Activated B cell treated with CpG ODN at 0.5 μM for 24 hours (primary cell): ENCODE measurements at regions of chr16 and their contacts with region 1.

Region 1: GRCh38 chr16:74695450-74696422 is 4.9 kb downstream of the MLKL start:
- DNase-seq: peak; percentile 44
- ATAC-seq: peak; percentile 89
- H3K4me3 Mint-ChIP-seq: peak overlapping the region; percentile 82
- H3K27ac Mint-ChIP-seq: peak overlapping the region; percentile 71
- H3K4me1 Mint-ChIP-seq: peaks cover 41% of the 10 kb centered on the region
- H3K27me3 Mint-ChIP-seq: no peaks in the 10 kb centered on the region
- CTCF ChIP-seq: no peak

Region 2: GRCh38 chr16:73036074-73036826 is 1659.5 kb before region 1 on chr16:
- CTCF ChIA-PET with region 1: no interaction called
- POLR2A ChIA-PET with region 1: interaction called, 17 read pairs
- intact Hi-C with region 1: no loop called
- DNase-seq: no peak
- ATAC-seq: peak; percentile 87
- H3K4me3 Mint-ChIP-seq: peak overlapping the region; percentile 75
- H3K27ac Mint-ChIP-seq: peak overlapping the region; percentile 78
- H3K4me1 Mint-ChIP-seq: peaks cover 46% of the 10 kb centered on the region
- H3K27me3 Mint-ChIP-seq: peaks cover 24% of the 10 kb centered on the region
- CTCF ChIP-seq: no peak

Region 3: DNA sequence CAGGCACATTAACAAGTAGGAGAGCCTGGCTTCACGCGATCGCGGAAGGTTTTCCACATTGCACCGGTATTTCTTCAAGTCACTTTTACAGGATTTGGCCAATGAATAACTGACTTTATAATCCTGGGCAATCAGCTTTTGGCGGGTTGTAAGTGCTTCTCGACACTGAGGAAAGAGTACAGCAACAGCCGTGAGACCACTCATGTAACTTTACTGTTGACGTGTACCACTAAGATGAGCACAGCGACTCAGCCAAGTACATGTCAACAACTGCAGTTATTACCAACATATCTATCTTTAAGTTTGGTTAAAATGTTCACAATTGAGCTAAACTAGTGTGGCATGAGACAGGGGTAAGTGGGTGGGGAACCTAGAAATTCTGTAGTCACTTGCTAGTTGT is 202.8 kb before region 1 on chr16:
- CTCF ChIA-PET with region 1: no interaction called
- POLR2A ChIA-PET with region 1: no interaction called
- intact Hi-C with region 1: no loop called
- DNase-seq: no peak
- ATAC-seq: no peak
- H3K4me3 Mint-ChIP-seq: no peak overlapping the region
- H3K27ac Mint-ChIP-seq: no peak overlapping the region
- H3K4me1 Mint-ChIP-seq: no peaks in the 10 kb centered on the region
- H3K27me3 Mint-ChIP-seq: no peaks in the 10 kb centered on the region
- CTCF ChIP-seq: no peak

Region 4: DNA sequence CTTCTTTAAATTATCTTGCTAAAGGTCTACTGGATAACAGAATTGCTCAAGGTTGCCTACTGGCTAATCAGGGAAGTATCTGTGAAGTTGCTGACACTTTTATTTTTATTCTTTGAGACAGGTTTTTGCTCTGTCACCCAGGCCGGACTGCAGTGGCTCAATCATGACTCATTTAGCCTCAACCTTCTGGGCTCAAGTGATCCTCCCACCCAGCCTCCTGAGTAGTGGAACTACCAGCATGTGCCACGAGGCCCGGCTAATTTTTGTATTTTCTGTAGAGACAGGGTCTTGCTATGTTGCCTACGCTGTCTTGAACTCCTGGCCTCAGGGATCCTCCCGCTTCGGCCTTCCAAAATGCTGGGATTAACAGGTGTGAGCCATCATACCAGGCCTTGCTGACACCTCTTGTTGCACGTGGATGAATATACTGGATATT is 131.9 kb before region 1 on chr16:
- CTCF ChIA-PET with region 1: no interaction called
- POLR2A ChIA-PET with region 1: no interaction called
- intact Hi-C with region 1: no loop called
- DNase-seq: no peak
- ATAC-seq: peak; percentile 28
- H3K4me3 Mint-ChIP-seq: no peak overlapping the region
- H3K27ac Mint-ChIP-seq: no peak overlapping the region
- H3K4me1 Mint-ChIP-seq: peaks cover 40% of the 10 kb centered on the region
- H3K27me3 Mint-ChIP-seq: no peaks in the 10 kb centered on the region
- CTCF ChIP-seq: no peak

Region 5: GRCh38 chr16:74666425-74667254 is 29.1 kb before region 1 on chr16 and contains the start of gene RFWD3:
- CTCF ChIA-PET with region 1: interaction called, 4 read pairs
- POLR2A ChIA-PET with region 1: interaction called, 45 read pairs
- intact Hi-C with region 1: loop called (anchors 1 kb)
- DNase-seq: peak; percentile 78
- ATAC-seq: peak; percentile 99
- H3K4me3 Mint-ChIP-seq: peak within 1 kb of the TSS; percentile 94
- H3K27ac Mint-ChIP-seq: peak within 1 kb of the TSS; percentile 90
- H3K4me1 Mint-ChIP-seq: peaks cover 38% of the 10 kb centered on the region
- H3K27me3 Mint-ChIP-seq: no peaks in the 10 kb centered on the region
- CTCF ChIP-seq: no peak
- total RNA-seq, gene RFWD3: 57.9 and 63.2 TPM in 2 replicates

Region 6: DNA sequence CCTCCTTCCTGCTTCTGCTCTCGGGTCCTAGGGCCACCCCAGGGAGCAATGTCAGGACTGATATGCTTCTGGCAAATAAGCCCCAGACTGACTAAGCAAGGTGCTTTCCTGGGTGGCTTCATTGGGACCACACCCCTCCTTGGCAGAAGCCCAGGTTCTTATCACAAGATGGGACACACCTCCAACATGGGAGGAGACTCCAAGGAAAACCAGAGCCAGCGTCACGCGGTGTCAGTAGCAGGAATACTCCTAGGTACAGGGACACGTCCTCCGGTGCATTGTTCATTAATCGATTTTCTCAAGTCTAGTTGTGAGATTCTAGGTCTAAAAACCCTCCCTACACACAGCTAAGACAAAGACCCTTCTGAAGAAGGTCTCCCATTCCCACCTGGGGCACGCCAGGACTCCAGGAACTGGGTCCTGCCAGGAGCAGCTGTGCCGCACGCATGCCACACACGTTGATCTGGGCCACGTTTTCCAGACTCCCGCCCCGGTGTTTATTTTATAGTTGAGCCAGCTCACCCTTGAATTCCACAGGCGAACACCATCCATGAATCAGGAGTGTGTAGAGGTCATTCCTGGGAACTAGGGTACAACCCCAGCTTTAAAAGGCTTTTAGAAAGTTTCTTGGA is 48.0 kb after region 1 on chr16:
- CTCF ChIA-PET with region 1: no interaction called
- POLR2A ChIA-PET with region 1: no interaction called
- intact Hi-C with region 1: no loop called
- DNase-seq: no peak
- ATAC-seq: no peak
- H3K4me3 Mint-ChIP-seq: no peak overlapping the region
- H3K27ac Mint-ChIP-seq: no peak overlapping the region
- H3K4me1 Mint-ChIP-seq: no peaks in the 10 kb centered on the region
- H3K27me3 Mint-ChIP-seq: no peaks in the 10 kb centered on the region
- CTCF ChIP-seq: no peak

Region 7: GRCh38 chr16:74774203-74775116 is 78.7 kb after region 1 on chr16 and contains the start of gene FA2H:
- CTCF ChIA-PET with region 1: no interaction called
- POLR2A ChIA-PET with region 1: interaction called, 3 read pairs
- intact Hi-C with region 1: loop called (anchors 2 kb)
- DNase-seq: peak; percentile 65
- ATAC-seq: peak; percentile 83
- H3K4me3 Mint-ChIP-seq: peak within 1 kb of the TSS; percentile 76
- H3K27ac Mint-ChIP-seq: peak within 1 kb of the TSS; percentile 50
- H3K4me1 Mint-ChIP-seq: peaks cover 34% of the 10 kb centered on the region
- H3K27me3 Mint-ChIP-seq: peaks cover 17% of the 10 kb centered on the region
- CTCF ChIP-seq: no peak
- total RNA-seq, gene FA2H: 0.76 and 0.78 TPM in 2 replicates

Region 8: DNA sequence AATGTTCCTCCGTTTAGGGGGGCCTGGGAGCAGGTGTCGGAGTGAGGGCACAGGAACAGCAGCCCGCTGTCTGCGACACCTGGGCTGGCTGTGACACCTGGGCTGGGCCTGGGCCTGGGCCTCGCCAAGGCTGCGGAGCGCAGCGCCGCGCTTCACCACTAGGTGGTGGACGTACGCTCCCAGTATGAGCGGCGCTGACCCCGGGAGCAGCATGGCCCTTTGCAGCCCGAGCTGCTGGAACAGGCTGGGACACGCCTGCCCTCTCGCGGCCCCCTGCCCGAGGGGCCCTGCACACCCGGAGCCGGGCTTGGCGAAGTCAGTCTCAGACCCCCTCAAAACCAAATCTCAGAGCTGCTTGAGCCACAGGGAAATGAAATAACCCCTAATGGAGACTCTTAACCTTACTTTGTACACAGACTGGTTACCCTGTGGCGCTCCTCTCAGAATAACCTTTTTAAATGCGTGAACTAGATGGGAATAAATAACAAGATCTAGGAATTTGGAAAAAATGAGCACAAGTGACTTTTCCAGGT is 117.4 kb after region 1 on chr16:
- CTCF ChIA-PET with region 1: no interaction called
- POLR2A ChIA-PET with region 1: no interaction called
- intact Hi-C with region 1: no loop called
- DNase-seq: peak; percentile 59
- ATAC-seq: peak; percentile 96
- H3K4me3 Mint-ChIP-seq: no peak overlapping the region
- H3K27ac Mint-ChIP-seq: no peak overlapping the region
- H3K4me1 Mint-ChIP-seq: no peaks in the 10 kb centered on the region
- H3K27me3 Mint-ChIP-seq: peaks cover 13% of the 10 kb centered on the region
- CTCF ChIP-seq: peak; percentile 78

Region 9: DNA sequence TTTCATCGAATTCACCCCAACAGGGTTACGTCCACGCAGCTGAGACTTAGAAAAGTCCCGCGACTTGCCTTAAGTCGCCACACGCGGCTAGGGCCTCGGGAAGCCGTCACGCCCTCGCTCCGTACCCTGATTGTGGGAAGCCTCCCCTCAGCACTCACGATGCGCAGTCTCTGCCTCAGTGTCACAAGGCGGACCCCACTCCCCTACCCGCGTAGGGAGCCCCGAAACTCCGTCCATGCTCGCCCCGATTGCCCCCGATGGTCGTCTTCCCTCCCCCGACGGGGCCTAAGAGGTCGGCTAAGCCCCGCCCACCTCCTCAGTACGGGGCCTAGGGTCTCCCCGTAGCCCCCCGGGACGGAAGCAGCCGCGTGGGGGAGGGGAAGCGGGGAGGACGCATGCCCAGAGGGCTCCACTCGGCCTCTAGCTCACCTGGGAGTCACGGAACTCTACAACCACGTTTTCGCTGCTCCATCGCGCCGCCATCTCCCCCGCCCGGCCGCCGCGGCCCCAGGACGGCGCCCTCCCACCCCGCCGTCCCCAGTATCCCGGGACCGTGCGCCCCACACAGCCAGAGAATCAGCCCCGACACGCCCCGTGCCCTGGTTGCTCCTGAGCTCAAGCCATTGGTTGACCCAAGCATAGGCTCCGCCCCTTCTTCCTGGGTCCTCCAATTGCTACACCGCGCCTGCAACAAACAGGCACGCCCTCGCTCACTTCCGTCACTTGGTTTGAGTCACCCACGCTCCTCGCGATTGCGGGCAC is 289.0 kb after region 1 on chr16 and contains the start of gene WDR59:
- CTCF ChIA-PET with region 1: no interaction called
- POLR2A ChIA-PET with region 1: no interaction called
- intact Hi-C with region 1: loop called (anchors 2 kb)
- DNase-seq: peak; percentile 90
- ATAC-seq: peak; percentile 99
- H3K4me3 Mint-ChIP-seq: peak within 1 kb of the TSS; percentile 96
- H3K27ac Mint-ChIP-seq: peak within 1 kb of the TSS; percentile 88
- H3K4me1 Mint-ChIP-seq: peaks cover 20% of the 10 kb centered on the region
- H3K27me3 Mint-ChIP-seq: no peaks in the 10 kb centered on the region
- CTCF ChIP-seq: no peak
- total RNA-seq, gene WDR59: 80.8 and 93.3 TPM in 2 replicates